B cell (primary cell): ENCODE measurements at regions of chr12 and their contacts with region 1.

Region 1: DNA sequence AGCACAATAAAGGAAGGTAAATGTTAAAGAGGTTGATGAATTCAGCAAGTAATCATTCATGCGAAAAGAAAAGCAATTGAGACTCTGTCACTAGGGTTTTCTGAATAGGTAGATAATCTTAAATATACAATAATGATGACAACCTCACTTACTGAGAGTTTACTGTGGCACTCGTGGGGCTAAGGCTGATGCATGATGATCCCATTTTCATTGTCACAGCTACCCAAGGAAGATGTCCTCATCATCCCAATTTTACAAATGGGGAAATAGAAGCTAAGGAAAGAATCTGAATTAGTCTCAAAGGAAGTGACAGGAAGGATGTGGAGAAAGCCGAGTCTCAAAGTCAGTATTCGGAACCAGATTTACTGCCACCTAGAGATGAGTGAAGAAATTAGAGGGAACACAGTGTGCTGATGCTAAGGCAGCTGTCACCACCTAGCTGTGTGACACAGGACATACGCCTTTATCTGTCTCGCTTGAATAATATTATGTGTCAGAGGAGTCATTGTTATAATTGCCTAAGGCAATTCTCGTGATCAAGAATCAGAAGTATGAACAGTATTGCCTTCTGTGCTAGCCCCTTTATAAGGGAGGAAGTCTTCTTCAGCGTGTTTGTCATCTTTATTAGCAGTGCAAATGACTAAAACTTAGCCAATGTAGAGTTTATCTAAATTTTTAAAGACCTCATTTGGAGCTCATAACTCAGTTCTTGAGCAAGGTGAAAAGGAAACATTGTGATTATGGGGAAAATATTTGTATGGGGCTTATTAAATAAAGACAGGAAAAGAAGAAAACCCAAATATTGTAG is 63.2 kb downstream of the ERGIC2 start:
- DNase-seq: peak; percentile 58
- ATAC-seq: peak; percentile 93
- H3K4me3 ChIP-seq: no peak overlapping the region
- H3K4me3 Mint-ChIP-seq: no peak overlapping the region
- H3K27ac ChIP-seq: no peak overlapping the region
- H3K27ac Mint-ChIP-seq: no peak overlapping the region
- H3K4me1 ChIP-seq: no peaks in the 10 kb centered on the region
- H3K4me1 Mint-ChIP-seq: peaks cover 6% of the 10 kb centered on the region
- H3K27me3 ChIP-seq: no peaks in the 10 kb centered on the region
- H3K27me3 Mint-ChIP-seq: no peaks in the 10 kb centered on the region
- CTCF ChIP-seq: peak; percentile 75

Region 2: GRCh38 chr12:29073628-29074239 is 244.0 kb before region 1 on chr12:
- CTCF ChIA-PET with region 1: interaction called, 16 read pairs
- POLR2A ChIA-PET with region 1: no interaction called
- intact Hi-C with region 1: no loop called
- DNase-seq: peak; percentile 29
- ATAC-seq: peak; percentile 43
- H3K4me3 ChIP-seq: no peak overlapping the region
- H3K4me3 Mint-ChIP-seq: no peak overlapping the region
- H3K27ac ChIP-seq: no peak overlapping the region
- H3K27ac Mint-ChIP-seq: no peak overlapping the region
- H3K4me1 ChIP-seq: no peaks in the 10 kb centered on the region
- H3K4me1 Mint-ChIP-seq: no peaks in the 10 kb centered on the region
- H3K27me3 ChIP-seq: peaks cover 0 to 2% (median 0%) of the 10 kb centered on the region in 4 experiments
- H3K27me3 Mint-ChIP-seq: peaks cover 16% of the 10 kb centered on the region
- CTCF ChIP-seq: peak; percentile 72

Region 3: GRCh38 chr12:29088611-29089219 is 229.0 kb before region 1 on chr12:
- CTCF ChIA-PET with region 1: interaction called, 14 read pairs
- POLR2A ChIA-PET with region 1: no interaction called
- intact Hi-C with region 1: loop called (anchors 5 kb)
- DNase-seq: no peak
- ATAC-seq: no peak
- H3K4me3 ChIP-seq: no peak overlapping the region
- H3K4me3 Mint-ChIP-seq: no peak overlapping the region
- H3K27ac ChIP-seq: no peak overlapping the region
- H3K27ac Mint-ChIP-seq: no peak overlapping the region
- H3K4me1 ChIP-seq: no peaks in the 10 kb centered on the region
- H3K4me1 Mint-ChIP-seq: no peaks in the 10 kb centered on the region
- H3K27me3 ChIP-seq: no peaks in the 10 kb centered on the region
- H3K27me3 Mint-ChIP-seq: peaks cover 13% of the 10 kb centered on the region
- CTCF ChIP-seq: no peak